Tibial artery (tissue), 4 donors: ENCODE measurements at regions of chr17 and their contacts with region 1.

Region 1: GRCh38 chr17:3004133-3004801 is 59.1 kb downstream of the OR1D5 start:
- DNase-seq: peak; percentile 99 to 100
- H3K4me3 ChIP-seq: peak overlapping the region; percentile 33 to 45
- H3K27ac ChIP-seq: peak overlapping the region; percentile 92 to 94
- H3K4me1 ChIP-seq: peaks cover 6 to 37% (median 19%) of the 10 kb centered on the region in 4 donors
- H3K27me3 ChIP-seq: no peaks in the 10 kb centered on the region
- CTCF ChIP-seq: no peak

Region 2: GRCh38 chr17:2853111-2853721 is 151.1 kb before region 1 on chr17:
- intact Hi-C with region 1: loop called (anchors 2 kb)
- DNase-seq: peak; percentile 45 to 80
- H3K4me3 ChIP-seq: peak overlapping the region; percentile 56 to 71
- H3K27ac ChIP-seq: peak overlapping the region; percentile 79 to 81
- H3K4me1 ChIP-seq: peaks cover 0 to 36% (median 22%) of the 10 kb centered on the region in 4 donors
- H3K27me3 ChIP-seq: no peaks in the 10 kb centered on the region
- CTCF ChIP-seq: no peak